Gastrocnemius medialis (tissue), 4 donors: ENCODE measurements at regions of chr11 and their contacts with region 1.

Region 1: GRCh38 chr11:57324886-57325734 is at the start of gene TNKS1BP1:
- DNase-seq: peak; percentile 99
- ATAC-seq: peak; percentile 74 to 77
- H3K4me3 ChIP-seq: peak within 1 kb of the TSS; percentile 82 to 95 (median 90)
- H3K27ac ChIP-seq: peak within 1 kb of the TSS; percentile 95 to 99 (median 97)
- H3K4me1 ChIP-seq: peaks cover 40 to 58% of the 10 kb centered on the region in 2 donors
- H3K27me3 ChIP-seq: no peaks in the 10 kb centered on the region
- CTCF ChIP-seq: no peak
- POLR2A ChIP-seq: peak; percentile 90 to 95
- total RNA-seq, gene TNKS1BP1: 98.5 to 165 (median 125) TPM

Region 2: GRCh38 chr11:57072640-57073039 is 252.5 kb before region 1 on chr11:
- in situ Hi-C with region 1: no loop called
- intact Hi-C with region 1: no loop called
- DNase-seq: no peak
- ATAC-seq: peak; percentile 74 to 85
- H3K4me3 ChIP-seq: no peak overlapping the region
- H3K27ac ChIP-seq: peak overlapping the region in 2 of 4 donors; percentile 18 to 27
- H3K4me1 ChIP-seq: no peaks in the 10 kb centered on the region
- H3K27me3 ChIP-seq: no peaks in the 10 kb centered on the region
- CTCF ChIP-seq: no peak
- POLR2A ChIP-seq: no peak

Region 3: GRCh38 chr11:57249384-57250319 is 75.5 kb before region 1 on chr11:
- in situ Hi-C with region 1: loop called in 1 of 4 experiments (anchors 25 kb)
- intact Hi-C with region 1: no loop called
- DNase-seq: peak in 1 of 2 donors; percentile 31
- ATAC-seq: peak in 1 of 2 donors; percentile 25
- H3K4me3 ChIP-seq: no peak overlapping the region
- H3K27ac ChIP-seq: peak overlapping the region in 3 of 4 donors; percentile 38 to 52 (median 41)
- H3K4me1 ChIP-seq: peaks cover 0 to 28% of the 10 kb centered on the region in 2 donors
- H3K27me3 ChIP-seq: no peaks in the 10 kb centered on the region
- CTCF ChIP-seq: peak; percentile 73 to 86 (median 76)
- POLR2A ChIP-seq: no peak

Region 4: DNA sequence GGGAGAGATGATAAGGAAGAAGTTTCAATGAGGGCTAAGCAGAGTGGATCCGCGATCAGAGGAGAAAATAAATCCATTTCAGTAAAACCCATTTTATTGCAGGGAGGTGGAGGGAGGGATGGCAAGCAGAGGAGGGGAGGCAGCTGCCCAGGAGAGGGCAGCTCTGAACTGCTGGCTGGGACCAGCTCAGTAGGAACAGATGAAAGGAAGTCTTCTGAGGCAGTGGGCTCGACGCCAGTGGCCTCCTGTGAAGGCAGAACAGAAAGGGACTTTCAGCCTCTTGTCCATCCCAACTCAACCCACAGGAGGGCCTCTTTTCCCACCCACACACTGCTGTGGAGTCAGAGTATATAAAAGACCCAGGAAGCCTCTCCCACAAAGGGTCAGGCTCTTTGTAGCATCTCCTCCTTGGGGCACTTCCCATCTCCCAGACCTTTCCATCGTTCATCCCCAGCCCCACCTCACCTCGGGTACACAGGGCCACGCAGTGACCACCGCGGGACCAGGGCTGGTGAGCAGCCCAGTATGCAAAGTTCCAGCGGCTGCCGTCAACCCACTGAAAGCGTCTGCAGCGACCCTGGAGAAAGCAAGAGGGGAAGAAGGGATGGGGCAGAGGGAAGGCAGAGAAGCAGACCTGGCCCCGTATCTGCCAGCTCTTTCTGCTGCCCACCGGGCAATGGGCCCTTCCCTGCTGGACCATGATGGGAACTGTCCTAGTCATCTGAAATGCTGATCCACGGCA is 62.4 kb after region 1 on chr11:
- in situ Hi-C with region 1: no loop called
- intact Hi-C with region 1: no loop called
- DNase-seq: no peak
- ATAC-seq: peak in 1 of 2 donors; percentile 16
- H3K4me3 ChIP-seq: no peak overlapping the region
- H3K27ac ChIP-seq: peak overlapping the region in 2 of 4 donors; percentile 46 to 64
- H3K4me1 ChIP-seq: peaks cover 14 to 16% of the 10 kb centered on the region in 2 donors
- H3K27me3 ChIP-seq: no peaks in the 10 kb centered on the region
- CTCF ChIP-seq: peak in 1 of 5 experiments; percentile 15
- POLR2A ChIP-seq: no peak

Region 5: GRCh38 chr11:57499413-57499982 is 174.4 kb after region 1 on chr11:
- in situ Hi-C with region 1: loop called in 2 of 4 experiments (anchors 10 to 25 kb)
- intact Hi-C with region 1: no loop called
- DNase-seq: peak; percentile 98 to 99
- ATAC-seq: peak; percentile 90 to 91
- H3K4me3 ChIP-seq: peak overlapping the region; percentile 29 to 53 (median 44)
- H3K27ac ChIP-seq: peak overlapping the region; percentile 87 to 95 (median 92)
- H3K4me1 ChIP-seq: peaks cover 30 to 40% of the 10 kb centered on the region in 2 donors
- H3K27me3 ChIP-seq: no peaks in the 10 kb centered on the region
- CTCF ChIP-seq: peak in 2 of 5 experiments; percentile 28 to 34
- POLR2A ChIP-seq: peak; percentile 67 to 81

Region 6: GRCh38 chr11:57644748-57645688 is 319.9 kb after region 1 on chr11:
- in situ Hi-C with region 1: loop called in 1 of 4 experiments (anchors 25 kb)
- intact Hi-C with region 1: no loop called
- DNase-seq: peak; percentile 66 to 73
- ATAC-seq: peak; percentile 69 to 76
- H3K4me3 ChIP-seq: no peak overlapping the region
- H3K27ac ChIP-seq: peak overlapping the region; percentile 29 to 56 (median 44)
- H3K4me1 ChIP-seq: peaks cover 17 to 22% of the 10 kb centered on the region in 2 donors
- H3K27me3 ChIP-seq: peaks cover 39 to 45% (median 43%) of the 10 kb centered on the region in 3 donors
- CTCF ChIP-seq: peak; percentile 71 to 96 (median 78)
- POLR2A ChIP-seq: no peak

Region 7: DNA sequence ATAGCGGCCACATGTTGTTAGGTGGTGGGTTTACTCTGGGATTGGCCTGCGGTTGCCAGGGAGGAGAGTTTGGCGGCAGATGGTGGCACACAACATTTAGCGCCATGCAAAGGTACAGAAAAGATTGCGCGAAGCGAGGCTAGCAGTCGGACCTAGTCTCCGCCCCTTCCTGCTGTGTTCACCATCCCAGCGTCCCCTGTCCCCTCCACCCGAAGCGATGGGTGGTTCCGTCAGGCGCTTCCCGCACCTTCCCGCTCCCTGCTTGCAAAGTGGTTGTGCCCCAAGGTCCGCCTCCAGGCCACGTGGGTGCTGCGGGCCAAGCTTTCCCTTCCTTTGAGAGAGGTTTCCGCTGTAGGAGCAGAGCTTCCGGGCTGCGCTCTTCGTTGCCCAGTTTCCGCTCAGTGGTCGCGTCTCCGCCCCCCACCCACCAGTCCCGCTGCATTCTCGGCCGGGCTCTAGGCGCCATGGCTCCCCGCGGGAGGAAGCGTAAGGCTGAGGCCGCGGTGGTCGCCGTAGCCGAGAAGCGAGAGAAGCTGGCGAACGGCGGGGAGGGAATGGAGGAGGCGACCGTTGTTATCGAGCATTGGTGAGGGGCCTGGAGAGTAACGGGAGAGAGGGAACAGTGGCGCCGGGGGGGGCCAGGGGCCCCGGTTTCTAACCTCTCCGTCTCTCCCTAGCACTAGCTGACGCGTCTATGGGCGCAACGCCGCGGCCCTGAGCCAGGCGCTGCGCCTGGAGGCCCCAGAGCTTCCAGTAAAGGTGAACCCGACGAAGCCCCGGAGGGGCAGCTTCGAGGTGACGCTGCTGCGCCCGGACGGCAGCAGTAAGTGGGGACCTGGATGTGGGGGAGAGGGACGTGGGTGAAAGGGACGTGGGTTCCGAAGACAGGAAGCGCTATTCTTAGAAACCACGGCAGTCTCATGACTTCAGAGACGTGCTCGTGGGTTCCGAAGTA is 416.3 kb after region 1 on chr11 and contains the start of gene SELENOH:
- in situ Hi-C with region 1: no loop called
- intact Hi-C with region 1: loop called (anchors 10 kb)
- DNase-seq: peak; percentile 95 to 96
- ATAC-seq: peak; percentile 95 to 97
- H3K4me3 ChIP-seq: peak within 1 kb of the TSS; percentile 77 to 100 (median 90)
- H3K27ac ChIP-seq: peak within 1 kb of the TSS; percentile 94 to 99 (median 98)
- H3K4me1 ChIP-seq: peaks cover 15 to 17% of the 10 kb centered on the region in 2 donors
- H3K27me3 ChIP-seq: no peaks in the 10 kb centered on the region
- CTCF ChIP-seq: no peak
- POLR2A ChIP-seq: peak; percentile 84
- total RNA-seq, gene SELENOH: 94.7 to 145 (median 132) TPM